Activated B cell treated with CpG ODN at 0.5 μM for 24 hours (primary cell): ENCODE measurements at regions of chr2 and their contacts with region 1.

Region 1: DNA sequence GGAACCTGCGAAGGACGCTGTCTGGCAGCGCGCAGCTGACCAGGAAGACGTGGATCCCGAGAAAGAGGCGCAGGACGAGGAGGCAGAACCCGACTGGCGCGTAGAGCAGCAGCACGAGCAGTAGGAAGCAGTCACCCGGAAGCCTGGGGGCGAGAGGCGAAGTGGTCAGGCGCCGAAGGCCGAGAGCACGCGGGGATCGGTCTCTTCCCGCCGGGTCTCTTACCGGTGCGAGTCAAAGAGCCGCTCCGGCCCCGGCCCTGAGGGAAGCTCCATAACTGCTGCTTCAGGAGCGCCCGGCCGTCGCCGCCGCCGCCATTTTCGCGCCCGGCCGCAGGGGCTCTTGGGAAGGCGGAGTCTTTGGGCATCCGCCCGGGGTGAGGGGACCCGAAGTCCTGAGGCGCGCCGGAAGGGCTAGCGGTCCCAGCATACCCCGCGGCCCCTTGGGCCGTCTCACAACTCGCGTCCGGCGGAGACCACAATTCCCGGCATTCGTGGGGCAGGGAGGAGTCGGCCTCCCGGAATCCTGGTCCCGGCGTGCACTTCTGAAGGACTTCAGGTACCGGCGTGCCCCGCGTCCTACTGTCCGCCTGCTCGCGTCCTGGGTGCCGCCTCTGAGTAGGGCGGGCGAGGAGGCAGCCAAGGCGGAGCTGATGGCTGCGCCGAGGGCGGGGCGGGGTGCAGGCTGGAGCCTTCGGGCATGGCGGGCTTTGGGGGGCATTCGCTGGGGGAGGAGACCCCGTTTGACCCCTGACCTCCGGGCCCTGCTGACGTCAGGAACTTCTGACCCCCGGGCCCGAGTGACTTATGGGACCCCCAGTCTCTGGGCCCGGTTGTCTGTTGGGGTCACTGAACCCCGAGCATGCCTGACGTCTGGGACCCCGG is at the starts of genes AUP1 and HTRA2:
- DNase-seq: peak; percentile 87
- ATAC-seq: peak; percentile 83
- H3K4me3 Mint-ChIP-seq: peak within 1 kb of the TSS; percentile 97
- H3K27ac Mint-ChIP-seq: peak within 1 kb of the TSS; percentile 96
- H3K4me1 Mint-ChIP-seq: peaks cover 55% of the 10 kb centered on the region
- H3K27me3 Mint-ChIP-seq: no peaks in the 10 kb centered on the region
- CTCF ChIP-seq: no peak
- total RNA-seq, gene AUP1: 167 and 177 TPM in 2 replicates
- total RNA-seq, gene HTRA2: 49.4 and 53.1 TPM in 2 replicates

Region 2: GRCh38 chr2:73828818-73829570 is 700.6 kb before region 1 on chr2 and contains the start of gene STAMBP:
- CTCF ChIA-PET with region 1: interaction called, 3 read pairs
- POLR2A ChIA-PET with region 1: no interaction called
- intact Hi-C with region 1: loop called (anchors 1 kb)
- DNase-seq: peak; percentile 80
- ATAC-seq: peak; percentile 92
- H3K4me3 Mint-ChIP-seq: peak within 1 kb of the TSS; percentile 98
- H3K27ac Mint-ChIP-seq: peak within 1 kb of the TSS; percentile 96
- H3K4me1 Mint-ChIP-seq: peaks cover 41% of the 10 kb centered on the region
- H3K27me3 Mint-ChIP-seq: no peaks in the 10 kb centered on the region
- CTCF ChIP-seq: no peak
- total RNA-seq, gene STAMBP: 32.2 and 35.4 TPM in 2 replicates

Region 3: GRCh38 chr2:74198461-74199274 is 330.9 kb before region 1 on chr2 and contains the start of gene MTHFD2:
- CTCF ChIA-PET with region 1: no interaction called
- POLR2A ChIA-PET with region 1: no interaction called
- intact Hi-C with region 1: loop called (anchors 5 kb)
- DNase-seq: peak; percentile 87
- ATAC-seq: peak; percentile 87
- H3K4me3 Mint-ChIP-seq: peak within 1 kb of the TSS; percentile 99
- H3K27ac Mint-ChIP-seq: peak within 1 kb of the TSS; percentile 100
- H3K4me1 Mint-ChIP-seq: peaks cover 34% of the 10 kb centered on the region
- H3K27me3 Mint-ChIP-seq: no peaks in the 10 kb centered on the region
- CTCF ChIP-seq: peak; percentile 50
- total RNA-seq, gene MTHFD2: 135 and 150 TPM in 2 replicates

Region 4: DNA sequence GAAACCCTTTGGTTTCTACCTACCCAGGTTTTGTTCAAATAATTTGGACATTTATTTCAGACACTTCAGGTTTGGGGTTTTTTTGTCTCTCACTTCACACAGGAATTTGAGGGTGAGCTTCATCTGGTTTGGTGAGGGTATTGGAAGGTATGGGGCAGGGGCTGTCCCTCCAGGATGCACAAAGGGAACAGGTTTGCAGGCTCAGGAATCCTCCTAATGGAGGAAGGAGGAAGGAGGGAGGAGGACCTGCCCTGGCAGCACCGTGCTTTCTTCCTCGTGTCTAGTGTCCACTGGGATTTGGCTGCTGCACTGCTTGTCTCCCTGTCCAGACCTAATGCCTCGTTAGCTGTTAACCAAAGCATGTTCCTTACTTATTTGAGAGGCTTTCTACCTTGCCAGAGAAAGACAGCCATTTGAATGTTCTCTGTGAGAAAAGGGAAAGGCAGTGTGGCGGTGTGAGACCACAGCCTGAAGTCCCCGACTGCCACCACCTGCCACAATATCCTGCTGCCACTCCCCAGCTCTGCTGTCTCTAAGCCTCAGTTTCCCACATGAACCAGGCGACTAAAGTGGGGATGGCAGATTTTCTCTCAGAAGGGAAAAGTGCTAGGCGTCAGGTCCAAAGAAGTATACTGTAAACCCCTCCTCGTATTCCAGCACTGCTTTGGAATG is 184.2 kb before region 1 on chr2:
- CTCF ChIA-PET with region 1: no interaction called
- POLR2A ChIA-PET with region 1: no interaction called
- intact Hi-C with region 1: no loop called
- DNase-seq: no peak
- ATAC-seq: no peak
- H3K4me3 Mint-ChIP-seq: no peak overlapping the region
- H3K27ac Mint-ChIP-seq: no peak overlapping the region
- H3K4me1 Mint-ChIP-seq: no peaks in the 10 kb centered on the region
- H3K27me3 Mint-ChIP-seq: no peaks in the 10 kb centered on the region
- CTCF ChIP-seq: no peak

Region 5: GRCh38 chr2:74421221-74421870 is 108.3 kb before region 1 on chr2 and contains the starts of genes C2orf81 and WDR54:
- CTCF ChIA-PET with region 1: no interaction called
- POLR2A ChIA-PET with region 1: interaction called, 3 read pairs
- intact Hi-C with region 1: loop called (anchors 1 kb)
- DNase-seq: peak; percentile 97
- ATAC-seq: peak; percentile 88
- H3K4me3 Mint-ChIP-seq: peak within 1 kb of the TSS; percentile 99
- H3K27ac Mint-ChIP-seq: peak within 1 kb of the TSS; percentile 96
- H3K4me1 Mint-ChIP-seq: peaks cover 44% of the 10 kb centered on the region
- H3K27me3 Mint-ChIP-seq: no peaks in the 10 kb centered on the region
- CTCF ChIP-seq: no peak
- total RNA-seq, gene C2orf81: 3.9 and 5.5 TPM in 2 replicates
- total RNA-seq, gene WDR54: 32.3 and 33.5 TPM in 2 replicates

Region 6: GRCh38 chr2:74498500-74499266 is 30.9 kb before region 1 on chr2:
- CTCF ChIA-PET with region 1: interaction called, 5 read pairs
- POLR2A ChIA-PET with region 1: interaction called, 35 read pairs
- intact Hi-C with region 1: no loop called
- DNase-seq: no peak
- ATAC-seq: peak; percentile 14
- H3K4me3 Mint-ChIP-seq: peak overlapping the region; percentile 87
- H3K27ac Mint-ChIP-seq: peak overlapping the region; percentile 62
- H3K4me1 Mint-ChIP-seq: peaks cover 42% of the 10 kb centered on the region
- H3K27me3 Mint-ChIP-seq: peaks cover 30% of the 10 kb centered on the region
- CTCF ChIP-seq: no peak

Region 7: DNA sequence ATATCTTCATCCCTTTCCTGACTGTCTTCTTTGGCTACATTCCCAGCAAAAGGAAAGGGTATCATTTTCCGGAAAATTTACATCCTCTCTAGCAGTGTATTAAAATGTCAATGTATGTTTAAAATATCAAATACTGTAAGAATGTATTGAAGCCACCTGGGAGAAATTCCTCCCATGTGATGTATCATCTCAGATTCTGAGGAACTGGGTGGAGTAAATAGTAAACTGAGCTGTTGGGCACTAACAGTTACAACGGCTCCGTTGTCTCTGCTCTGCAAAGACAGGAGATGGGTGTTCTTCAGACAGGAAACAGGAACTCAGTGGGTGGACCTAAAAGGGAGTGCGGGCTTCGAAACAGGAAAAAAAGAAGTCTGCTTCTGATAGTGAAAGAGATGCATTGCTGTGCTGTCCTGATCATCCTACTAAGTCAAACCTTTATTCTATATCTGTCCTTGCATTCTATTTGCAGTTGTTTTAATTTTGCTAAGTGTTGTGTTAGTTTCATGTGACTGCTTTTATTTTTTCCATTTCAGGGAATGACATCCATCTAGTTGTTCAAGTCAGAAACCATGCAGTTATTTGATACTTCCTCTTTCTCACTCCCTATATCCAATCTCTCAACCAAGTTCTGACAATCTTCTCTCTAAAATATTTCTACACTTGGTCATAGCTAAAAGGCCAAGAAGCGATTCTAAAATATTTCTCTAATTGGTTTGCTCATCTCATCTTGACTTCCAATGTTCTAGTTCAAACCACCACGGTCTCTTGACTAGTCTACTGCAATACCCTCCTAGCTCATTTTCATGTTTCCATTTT is 44.4 kb after region 1 on chr2:
- CTCF ChIA-PET with region 1: interaction called, 4 read pairs
- POLR2A ChIA-PET with region 1: interaction called, 11 read pairs
- intact Hi-C with region 1: no loop called
- DNase-seq: no peak
- ATAC-seq: peak; percentile 67
- H3K4me3 Mint-ChIP-seq: peak overlapping the region; percentile 53
- H3K27ac Mint-ChIP-seq: peak overlapping the region; percentile 89
- H3K4me1 Mint-ChIP-seq: peaks cover 39% of the 10 kb centered on the region
- H3K27me3 Mint-ChIP-seq: no peaks in the 10 kb centered on the region
- CTCF ChIP-seq: no peak

Region 8: DNA sequence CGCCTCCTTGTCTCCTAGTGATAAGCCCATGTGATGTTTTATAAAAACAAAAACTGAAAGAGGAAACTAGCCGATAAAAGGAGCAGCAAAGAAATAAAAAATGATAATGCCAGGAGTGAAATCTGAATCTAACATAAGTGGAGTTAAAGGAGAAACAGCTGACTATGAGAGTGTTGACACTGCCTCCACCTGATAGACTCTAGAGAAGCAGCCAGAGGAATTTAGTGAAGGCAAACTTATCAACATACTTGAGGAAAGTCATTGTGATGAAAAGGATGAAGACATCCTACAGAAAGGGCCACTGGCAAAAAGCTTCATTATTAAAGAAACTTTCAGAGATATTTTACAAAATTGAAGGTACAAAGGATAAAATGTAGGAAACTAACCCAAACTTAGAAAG is 116.6 kb after region 1 on chr2:
- CTCF ChIA-PET with region 1: no interaction called
- POLR2A ChIA-PET with region 1: no interaction called
- intact Hi-C with region 1: no loop called
- DNase-seq: no peak
- ATAC-seq: no peak
- H3K4me3 Mint-ChIP-seq: no peak overlapping the region
- H3K27ac Mint-ChIP-seq: no peak overlapping the region
- H3K4me1 Mint-ChIP-seq: peaks cover 2% of the 10 kb centered on the region
- H3K27me3 Mint-ChIP-seq: peaks cover 38% of the 10 kb centered on the region
- CTCF ChIP-seq: no peak

Region 9: GRCh38 chr2:74919827-74920226 is 390.2 kb after region 1 on chr2:
- CTCF ChIA-PET with region 1: no interaction called
- POLR2A ChIA-PET with region 1: no interaction called
- intact Hi-C with region 1: no loop called
- DNase-seq: peak; percentile 72
- ATAC-seq: peak; percentile 88
- H3K4me3 Mint-ChIP-seq: peak overlapping the region; percentile 42
- H3K27ac Mint-ChIP-seq: no peak overlapping the region
- H3K4me1 Mint-ChIP-seq: peaks cover 14% of the 10 kb centered on the region
- H3K27me3 Mint-ChIP-seq: peaks cover 10% of the 10 kb centered on the region
- CTCF ChIP-seq: peak; percentile 57